ENCODE measurements at regions of chr3 and their contacts with region 1.

Region 1: DNA sequence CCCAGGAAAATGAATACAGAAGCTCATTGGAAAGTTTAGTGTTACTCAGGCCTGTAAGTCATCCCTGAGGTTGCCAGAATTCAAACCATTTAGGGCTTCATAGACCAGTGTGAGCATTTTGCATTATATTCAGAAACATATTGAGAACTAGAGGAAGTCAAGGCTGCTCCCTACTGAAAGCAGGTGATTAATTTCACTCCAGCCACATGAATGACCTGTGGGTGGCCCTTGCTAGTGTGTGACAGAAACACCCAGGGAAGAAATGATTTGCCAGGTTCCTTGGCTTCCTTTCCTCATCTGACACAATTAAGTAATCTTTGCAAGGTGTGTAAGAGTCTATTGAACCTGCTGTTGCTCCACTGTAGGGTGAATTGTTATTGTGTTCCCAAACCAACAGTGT is 61.8 kb downstream of the GAP43 start:
- DNase-seq: no peak
- H3K4me3 Mint-ChIP-seq: no peak overlapping the region
- H3K27ac Mint-ChIP-seq: no peak overlapping the region
- H3K4me1 Mint-ChIP-seq: no peaks in the 10 kb centered on the region
- H3K27me3 Mint-ChIP-seq: peaks cover 16% of the 10 kb centered on the region

Region 2: DNA sequence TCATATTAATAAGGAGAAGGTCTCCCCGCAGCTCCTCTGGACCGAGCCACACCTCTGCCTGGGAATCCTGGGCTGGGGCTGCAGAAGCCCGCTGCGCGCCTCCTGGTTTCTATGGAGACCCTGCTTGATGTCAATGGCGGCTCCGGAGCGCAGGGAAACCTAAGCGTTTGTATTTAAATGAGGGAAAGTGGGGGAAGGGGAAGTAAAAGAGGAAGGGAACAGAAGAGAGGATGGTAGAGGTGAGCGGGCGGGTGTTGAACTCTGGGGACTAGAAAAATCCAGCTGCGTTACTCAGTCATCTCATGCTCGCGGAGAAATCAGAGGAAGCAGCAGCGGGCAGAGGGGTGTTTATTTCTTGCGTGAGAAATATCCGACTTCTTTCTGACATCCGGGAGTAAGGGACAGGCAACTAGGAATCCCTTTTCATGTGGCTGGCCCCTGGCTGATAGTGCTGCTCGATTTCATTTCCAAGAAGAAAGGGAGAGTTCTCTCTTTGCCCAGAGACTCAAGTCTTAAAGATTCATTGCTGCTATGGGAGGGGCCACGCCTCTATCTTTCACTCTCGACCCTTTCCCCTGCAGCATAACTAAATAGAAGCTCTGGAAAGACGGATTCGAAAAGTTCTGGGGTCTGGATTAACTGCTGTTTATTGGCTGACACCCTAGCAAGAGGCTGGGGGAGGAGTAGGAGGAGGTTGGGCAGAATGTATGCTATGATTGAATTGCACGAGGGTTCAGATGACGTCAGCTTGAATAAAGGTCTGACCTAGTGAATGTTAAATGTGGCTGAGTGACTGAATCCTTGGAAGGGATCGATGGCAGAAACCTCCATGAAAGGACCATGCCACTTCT is 172.3 kb before region 1 on chr3:
- intact Hi-C with region 1: loop called (anchors 10 kb)
- DNase-seq: peak; percentile 55
- H3K4me3 Mint-ChIP-seq: peak overlapping the region; percentile 80
- H3K27ac Mint-ChIP-seq: peak overlapping the region; percentile 0
- H3K4me1 Mint-ChIP-seq: peaks cover 12% of the 10 kb centered on the region
- H3K27me3 Mint-ChIP-seq: peaks cover 37% of the 10 kb centered on the region

Region 3: DNA sequence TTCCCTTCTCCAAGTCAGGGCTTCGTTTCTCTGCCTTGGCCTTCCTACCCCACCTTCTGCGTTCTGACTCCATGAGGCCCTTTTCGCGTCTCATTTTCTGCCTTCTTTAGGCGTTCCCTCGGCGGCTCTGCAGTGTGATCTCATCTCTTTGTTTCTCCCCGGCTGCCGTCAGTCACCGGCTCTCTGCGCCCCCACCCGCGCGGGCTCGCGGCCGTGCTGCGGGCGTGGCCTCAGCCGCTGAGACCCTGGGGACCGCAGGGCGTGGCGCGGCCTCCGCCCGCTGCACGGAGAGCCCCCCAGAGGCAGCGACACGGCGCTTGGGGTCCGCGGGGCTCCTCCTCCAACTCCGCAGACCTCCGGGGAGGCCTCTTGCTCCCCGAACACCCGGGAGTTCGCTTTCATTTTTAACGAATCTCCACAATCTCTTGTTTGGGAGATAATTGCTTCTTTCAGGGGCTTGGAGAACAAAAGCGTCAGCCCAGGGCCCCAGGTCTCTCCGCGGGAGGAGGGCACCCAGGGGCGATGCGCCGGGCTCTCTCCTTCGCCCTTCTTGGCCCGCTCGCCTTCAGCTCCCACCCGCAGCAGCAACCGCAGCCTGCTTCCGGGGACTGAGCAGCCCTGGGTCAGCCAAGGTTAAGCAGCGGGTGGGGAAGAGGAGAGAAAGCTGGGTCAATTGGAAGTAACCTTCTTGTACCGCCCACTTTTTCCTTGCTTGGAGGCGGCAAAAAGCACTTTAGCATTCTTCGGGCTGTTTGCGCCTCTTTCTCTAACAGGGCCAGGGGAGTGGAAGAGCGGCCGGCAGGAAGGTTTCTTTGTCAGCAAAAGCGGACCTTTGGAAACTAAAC is 26.5 kb before region 1 on chr3:
- intact Hi-C with region 1: loop called (anchors 2 kb)
- DNase-seq: peak; percentile 91
- H3K4me3 Mint-ChIP-seq: peak overlapping the region; percentile 98
- H3K27ac Mint-ChIP-seq: peak overlapping the region; percentile 99
- H3K4me1 Mint-ChIP-seq: peaks cover 23% of the 10 kb centered on the region
- H3K27me3 Mint-ChIP-seq: peaks cover 7% of the 10 kb centered on the region

Region 4: GRCh38 chr3:115913069-115913674 is 228.1 kb after region 1 on chr3:
- intact Hi-C with region 1: no loop called
- DNase-seq: no peak
- H3K4me3 Mint-ChIP-seq: no peak overlapping the region
- H3K27ac Mint-ChIP-seq: no peak overlapping the region
- H3K4me1 Mint-ChIP-seq: no peaks in the 10 kb centered on the region
- H3K27me3 Mint-ChIP-seq: no peaks in the 10 kb centered on the region

Measured in activated CD4-positive, alpha-beta T cell treated with anti-CD3 and anti-CD28 coated beads, Interleukin-2, amount 10 ng/mL, durations not matched to agents 24 days and 14 days (primary cell).